ENCODE measurements at regions of chr14 and their contacts with region 1.

Region 1: DNA sequence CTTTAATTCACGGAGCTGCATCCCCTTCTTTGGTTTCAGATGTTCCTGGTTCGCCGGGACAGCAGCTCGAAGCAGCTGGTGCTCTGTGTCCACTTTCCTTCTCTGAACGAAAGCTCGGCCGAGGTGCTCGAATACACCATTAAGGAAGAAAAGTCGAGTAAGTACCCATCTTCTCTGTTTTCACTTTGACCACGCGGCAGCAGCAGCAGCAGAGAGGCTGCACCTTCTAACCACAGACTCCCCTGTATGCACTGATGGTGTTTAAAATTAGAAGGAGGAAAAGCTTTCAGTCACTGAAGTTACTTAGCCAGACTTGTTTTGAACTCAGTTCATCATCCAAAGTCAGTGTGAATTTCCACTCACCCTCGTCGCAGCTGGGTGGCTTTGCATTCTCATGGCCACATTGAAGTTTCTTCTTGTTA is 63.8 kb downstream of the RIN3 start:
- DNase-seq: peak; percentile 72
- CTCF ChIP-seq: no peak

Region 2: DNA sequence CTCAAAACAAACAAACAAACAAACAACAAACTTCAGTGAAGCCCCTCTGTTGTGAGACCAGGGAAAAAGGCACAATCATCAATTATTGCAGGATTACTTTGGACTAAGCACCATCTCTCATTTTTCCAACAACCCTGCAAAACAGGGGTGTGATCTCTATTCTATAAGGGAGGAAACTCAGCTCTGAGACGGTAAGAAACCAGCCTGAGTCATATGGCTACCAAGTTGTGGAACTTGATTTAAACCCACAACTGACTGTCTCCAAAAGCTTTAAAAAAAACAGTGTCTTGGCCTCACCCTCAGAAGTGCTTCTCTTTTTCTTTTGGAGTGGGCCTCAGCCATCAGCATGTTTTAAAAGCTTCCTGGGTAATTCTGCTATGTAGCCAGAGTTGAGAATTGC is 14.0 kb before region 1 on chr14:
- CTCF ChIA-PET with region 1: interaction called, 18 read pairs
- POLR2A ChIA-PET with region 1: interaction called, 6 read pairs
- DNase-seq: peak; percentile 73
- CTCF ChIP-seq: no peak